ENCODE measurements at regions of chr17 and their contacts with region 1.

Region 1: DNA sequence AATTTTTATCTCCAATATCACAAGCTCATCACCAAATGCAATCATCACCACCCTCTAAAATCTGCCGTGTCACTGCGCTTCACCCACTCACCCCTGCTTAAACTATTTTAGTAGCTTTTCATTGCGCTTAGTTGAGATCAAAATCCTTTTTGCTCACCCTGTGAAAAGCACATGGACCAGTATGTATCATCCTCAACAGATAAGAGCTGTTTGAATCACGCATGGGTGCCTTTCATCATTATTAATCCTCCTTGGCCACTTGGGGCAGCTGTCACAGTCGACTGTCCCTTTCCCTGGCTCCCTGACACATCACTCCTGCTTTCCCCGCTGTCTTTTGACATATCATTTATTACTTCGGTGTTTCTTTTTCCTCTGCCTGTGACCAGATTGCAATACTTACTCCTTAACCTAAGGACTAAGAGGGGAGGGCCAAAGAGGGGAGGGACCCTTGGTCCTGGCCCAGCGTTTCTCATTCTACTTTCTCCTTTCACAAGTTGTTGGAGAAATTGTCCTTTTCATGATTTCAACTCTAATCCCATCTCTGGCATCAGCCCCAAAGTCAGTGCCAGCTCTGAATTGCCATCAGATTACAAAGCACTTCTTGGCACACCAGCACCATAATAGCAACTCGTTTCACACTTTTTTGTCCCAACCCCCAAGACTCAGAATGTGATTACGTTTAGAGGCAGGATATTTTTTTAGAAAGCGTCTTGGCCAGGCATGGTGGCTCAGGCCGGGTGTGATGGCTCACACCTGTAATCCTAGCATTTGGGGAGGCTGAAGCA is 8.6 kb upstream of the KDM6B start:
- DNase-seq: no peak
- H3K4me3 Mint-ChIP-seq: no peak overlapping the region
- H3K27ac Mint-ChIP-seq: no peak overlapping the region
- H3K4me1 Mint-ChIP-seq: no peaks in the 10 kb centered on the region
- H3K27me3 Mint-ChIP-seq: peaks cover 1% of the 10 kb centered on the region

Region 2: DNA sequence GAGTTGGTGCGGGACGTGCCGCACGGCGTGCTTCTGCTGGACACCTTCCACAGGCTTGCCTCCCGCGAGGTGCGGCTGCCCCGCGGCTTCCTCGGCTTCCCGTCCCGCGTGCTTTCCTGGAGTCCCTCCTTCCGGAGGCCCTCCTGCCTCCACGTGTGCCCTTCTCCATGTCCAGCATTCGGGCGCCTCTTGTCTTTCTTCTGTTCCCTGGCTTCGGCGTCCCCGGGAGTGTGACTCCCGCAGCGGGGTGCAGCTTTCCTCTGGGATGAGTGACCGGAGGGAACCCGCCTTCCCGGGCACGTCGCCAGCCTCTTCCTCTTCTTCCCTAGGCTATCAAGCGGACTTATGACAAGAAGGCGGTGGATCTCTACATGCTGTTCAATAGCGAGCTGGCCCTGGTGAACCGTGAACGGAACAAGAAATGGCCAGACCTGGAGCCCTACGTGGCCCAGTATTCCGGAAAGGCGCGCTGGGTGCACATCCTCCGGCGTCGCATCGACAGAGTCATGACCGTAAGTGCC is 84.9 kb before region 1 on chr17:
- CTCF ChIA-PET with region 1: interaction called, 9 read pairs
- POLR2A ChIA-PET with region 1: no interaction called
- intact Hi-C with region 1: loop called (anchors 2 kb)
- DNase-seq: no peak
- H3K4me3 Mint-ChIP-seq: no peak overlapping the region
- H3K27ac Mint-ChIP-seq: no peak overlapping the region
- H3K4me1 Mint-ChIP-seq: no peaks in the 10 kb centered on the region
- H3K27me3 Mint-ChIP-seq: peaks cover 11% of the 10 kb centered on the region

Region 3: DNA sequence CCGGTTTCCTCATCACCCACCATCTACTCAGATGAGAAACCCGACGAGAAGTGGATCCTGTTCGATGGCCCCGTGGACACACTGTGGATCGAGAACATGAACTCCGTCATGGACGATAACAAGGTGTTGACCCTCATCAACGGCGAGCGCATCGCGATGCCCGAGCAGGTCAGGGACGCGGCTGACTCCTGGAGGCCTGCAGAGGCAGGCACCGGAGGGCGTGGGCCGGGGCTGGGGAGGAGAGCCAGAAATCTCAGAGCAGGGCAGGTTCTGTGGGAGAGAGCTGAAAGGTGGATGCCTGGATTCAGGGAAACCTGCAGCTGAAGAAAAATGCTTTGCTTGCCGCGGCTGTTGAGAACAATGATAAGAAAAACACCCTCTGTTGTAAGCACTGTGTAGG is 38.5 kb before region 1 on chr17:
- CTCF ChIA-PET with region 1: no interaction called
- POLR2A ChIA-PET with region 1: no interaction called
- intact Hi-C with region 1: no loop called
- DNase-seq: no peak
- H3K4me3 Mint-ChIP-seq: no peak overlapping the region
- H3K27ac Mint-ChIP-seq: no peak overlapping the region
- H3K4me1 Mint-ChIP-seq: no peaks in the 10 kb centered on the region
- H3K27me3 Mint-ChIP-seq: peaks cover 6% of the 10 kb centered on the region

Region 4: GRCh38 chr17:7851438-7852256 is 26.2 kb after region 1 on chr17:
- CTCF ChIA-PET with region 1: interaction called, 9 read pairs
- POLR2A ChIA-PET with region 1: no interaction called
- intact Hi-C with region 1: loop called (anchors 1 kb)
- DNase-seq: peak; percentile 95
- H3K4me3 Mint-ChIP-seq: peak overlapping the region; percentile 66
- H3K27ac Mint-ChIP-seq: peak overlapping the region; percentile 49
- H3K4me1 Mint-ChIP-seq: peaks cover 56% of the 10 kb centered on the region
- H3K27me3 Mint-ChIP-seq: no peaks in the 10 kb centered on the region

Region 5: GRCh38 chr17:7915611-7916382 is 90.4 kb after region 1 on chr17 and contains the start of gene RNF227:
- CTCF ChIA-PET with region 1: no interaction called
- POLR2A ChIA-PET with region 1: no interaction called
- intact Hi-C with region 1: no loop called
- DNase-seq: peak; percentile 92
- H3K4me3 Mint-ChIP-seq: peak within 1 kb of the TSS; percentile 85
- H3K27ac Mint-ChIP-seq: peak within 1 kb of the TSS; percentile 86
- H3K4me1 Mint-ChIP-seq: peaks cover 29% of the 10 kb centered on the region
- H3K27me3 Mint-ChIP-seq: no peaks in the 10 kb centered on the region
- total RNA-seq, gene RNF227: 2.7 to 3.3 TPM

Region 6: DNA sequence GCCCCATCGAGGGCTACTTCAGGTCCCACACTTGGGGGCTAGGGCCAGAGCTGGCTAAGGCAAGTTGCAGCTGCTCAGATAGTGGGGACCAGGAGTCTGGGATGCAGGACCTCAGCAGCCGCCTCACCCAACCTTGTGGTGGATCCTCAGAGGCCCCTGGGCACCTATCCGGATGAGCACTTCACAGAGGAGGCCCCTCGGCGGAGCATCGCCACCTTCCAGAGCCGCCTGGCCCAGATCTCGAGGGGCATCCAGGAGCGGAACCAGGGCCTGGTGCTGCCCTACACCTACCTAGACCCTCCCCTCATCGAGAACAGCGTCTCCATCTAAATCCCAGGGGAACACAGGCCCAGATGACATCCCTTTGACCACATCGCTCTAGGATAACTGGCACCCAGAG is 222.8 kb after region 1 on chr17:
- CTCF ChIA-PET with region 1: no interaction called
- POLR2A ChIA-PET with region 1: no interaction called
- intact Hi-C with region 1: no loop called
- DNase-seq: no peak
- H3K4me3 Mint-ChIP-seq: no peak overlapping the region
- H3K27ac Mint-ChIP-seq: no peak overlapping the region
- H3K4me1 Mint-ChIP-seq: no peaks in the 10 kb centered on the region
- H3K27me3 Mint-ChIP-seq: peaks cover 2% of the 10 kb centered on the region

Measured in activated CD4-positive, alpha-beta memory T cell treated with anti-CD3 and anti-CD28 coated beads for 36 hours (primary cell).